K562 (cell line): ENCODE measurements at regions of chr1 and their contacts with region 1.

Region 1: DNA sequence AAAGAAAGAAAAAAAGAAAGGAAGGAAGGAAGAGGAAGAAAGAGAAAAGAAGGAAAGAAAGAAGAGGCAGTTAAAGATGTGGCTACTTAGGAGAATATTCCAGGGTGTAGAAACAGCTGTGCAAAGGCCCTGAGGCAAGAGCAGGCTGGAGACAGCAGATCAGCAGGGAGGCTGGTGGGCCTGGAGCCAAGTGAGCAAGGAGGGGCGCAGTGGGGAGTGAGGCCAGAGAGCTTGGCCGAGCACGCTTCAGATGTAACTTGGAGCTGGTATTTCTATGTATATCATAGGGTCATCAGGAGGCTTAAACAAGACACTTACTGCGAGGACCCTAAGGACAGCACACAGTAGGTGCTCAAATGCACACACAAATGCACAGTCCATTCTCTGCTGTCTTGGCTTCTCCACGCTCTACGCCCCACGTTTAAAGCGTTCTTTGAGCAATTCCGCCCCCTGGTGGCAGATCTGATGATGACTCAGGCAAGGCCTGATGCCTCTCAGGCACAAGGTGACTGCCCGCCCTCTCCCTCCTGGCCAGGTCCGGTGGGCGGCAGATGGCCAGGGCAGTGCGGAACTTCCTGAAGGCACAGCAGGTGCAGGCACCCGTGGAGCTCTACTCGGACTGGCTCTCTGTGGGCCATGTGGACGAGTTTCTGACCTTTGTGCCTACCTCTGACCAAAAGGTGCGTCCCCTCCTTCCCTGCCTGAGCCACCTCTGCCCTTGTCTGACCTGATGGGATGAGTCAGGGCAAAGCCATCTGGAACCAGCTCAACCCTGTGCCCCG is 11.9 kb upstream of the PADI3 start:
- DNase-seq: peak; percentile 87 to 92 (median 91)
- ATAC-seq: peak; percentile 97
- H3K4me3 ChIP-seq: no peak overlapping the region
- H3K27ac ChIP-seq: no peak overlapping the region
- H3K4me1 ChIP-seq: peaks cover 0 to 3% of the 10 kb centered on the region in 2 experiments; a peak in 1 of 5 replicates
- H3K27me3 ChIP-seq: peaks cover 13 to 53% of the 10 kb centered on the region in 2 experiments; a peak in 4 of 5 replicates
- CTCF ChIP-seq: peak; percentile 91 to 95 (median 94)
- EP300 ChIP-seq: no peak
- POLR2A ChIP-seq: no peak
- RAD21 ChIP-seq: peak; percentile 79 to 98

Region 2: DNA sequence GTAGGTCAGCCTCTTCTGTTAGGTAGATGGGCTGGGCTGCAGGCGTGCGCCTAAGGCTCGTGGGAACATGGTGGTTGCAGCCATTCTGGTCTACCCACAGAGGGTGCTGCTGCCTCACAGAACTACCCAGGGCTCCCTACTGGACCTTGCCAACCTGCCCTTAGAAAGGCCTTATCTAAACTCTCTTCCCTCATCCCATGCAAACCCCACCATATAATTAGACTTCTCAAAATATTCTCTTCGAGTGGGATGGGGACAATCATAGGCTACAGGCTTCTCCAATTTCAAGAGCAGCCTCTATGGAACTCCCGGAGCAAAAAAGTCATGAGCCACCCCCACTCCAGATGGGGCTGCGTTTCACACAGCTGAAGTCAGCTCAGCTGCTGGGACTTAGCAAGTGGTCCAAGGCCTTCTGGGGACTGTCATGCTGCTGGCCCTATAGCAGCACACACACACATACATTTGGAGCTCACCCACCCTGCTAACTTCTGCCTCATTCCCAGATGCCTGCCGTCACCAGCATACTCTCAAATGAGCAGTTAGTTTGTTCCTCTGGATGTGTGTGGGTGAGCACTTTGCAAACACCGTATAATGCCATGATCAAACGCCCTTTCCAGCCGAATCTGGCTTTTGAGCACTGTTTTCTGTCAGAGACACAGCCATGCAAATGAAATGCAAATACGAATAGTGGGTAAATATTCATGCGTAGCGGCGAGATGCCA is 177.1 kb before region 1 on chr1:
- CTCF ChIA-PET with region 1: interaction called, 26 read pairs
- POLR2A ChIA-PET with region 1: interaction called, 3 read pairs
- in situ Hi-C with region 1: no loop called
- intact Hi-C with region 1: loop called (anchors 1 kb)
- DNase-seq: peak; percentile 60 to 78 (median 72)
- ATAC-seq: peak; percentile 98
- H3K4me3 ChIP-seq: no peak overlapping the region
- H3K27ac ChIP-seq: no peak overlapping the region
- H3K4me1 ChIP-seq: peaks cover 0 to 5% of the 10 kb centered on the region in 2 experiments; a peak in 3 of 5 replicates
- H3K27me3 ChIP-seq: peaks cover 11 to 15% of the 10 kb centered on the region in 2 experiments; a peak in 4 of 5 replicates
- CTCF ChIP-seq: peak; percentile 87 to 96 (median 92)
- EP300 ChIP-seq: no peak
- POLR2A ChIP-seq: no peak
- RAD21 ChIP-seq: peak; percentile 79 to 92

Region 3: GRCh38 chr1:17274186-17275170 is 37.5 kb after region 1 on chr1:
- CTCF ChIA-PET with region 1: no interaction called
- POLR2A ChIA-PET with region 1: no interaction called
- in situ Hi-C with region 1: no loop called
- intact Hi-C with region 1: loop called (anchors 2 kb)
- DNase-seq: peak; percentile 78 to 88 (median 87)
- ATAC-seq: peak; percentile 98
- H3K4me3 ChIP-seq: no peak overlapping the region
- H3K27ac ChIP-seq: no peak overlapping the region
- H3K4me1 ChIP-seq: 0 out of 5 replicates have a peak, but pooled peaks cover 0 to 2% of the 10 kb centered on the region in 2 experiments
- H3K27me3 ChIP-seq: peaks cover 3 to 53% of the 10 kb centered on the region in 2 experiments; a peak in 4 of 5 replicates
- CTCF ChIP-seq: peak; percentile 89 to 95 (median 91)
- EP300 ChIP-seq: no peak
- POLR2A ChIP-seq: no peak
- RAD21 ChIP-seq: peak in 1 of 2 experiments; percentile 76; a peak in 2 of 4 replicates